MCF 10A (cell line): ENCODE measurements at regions of chr12 and their contacts with region 1.

Region 1: DNA sequence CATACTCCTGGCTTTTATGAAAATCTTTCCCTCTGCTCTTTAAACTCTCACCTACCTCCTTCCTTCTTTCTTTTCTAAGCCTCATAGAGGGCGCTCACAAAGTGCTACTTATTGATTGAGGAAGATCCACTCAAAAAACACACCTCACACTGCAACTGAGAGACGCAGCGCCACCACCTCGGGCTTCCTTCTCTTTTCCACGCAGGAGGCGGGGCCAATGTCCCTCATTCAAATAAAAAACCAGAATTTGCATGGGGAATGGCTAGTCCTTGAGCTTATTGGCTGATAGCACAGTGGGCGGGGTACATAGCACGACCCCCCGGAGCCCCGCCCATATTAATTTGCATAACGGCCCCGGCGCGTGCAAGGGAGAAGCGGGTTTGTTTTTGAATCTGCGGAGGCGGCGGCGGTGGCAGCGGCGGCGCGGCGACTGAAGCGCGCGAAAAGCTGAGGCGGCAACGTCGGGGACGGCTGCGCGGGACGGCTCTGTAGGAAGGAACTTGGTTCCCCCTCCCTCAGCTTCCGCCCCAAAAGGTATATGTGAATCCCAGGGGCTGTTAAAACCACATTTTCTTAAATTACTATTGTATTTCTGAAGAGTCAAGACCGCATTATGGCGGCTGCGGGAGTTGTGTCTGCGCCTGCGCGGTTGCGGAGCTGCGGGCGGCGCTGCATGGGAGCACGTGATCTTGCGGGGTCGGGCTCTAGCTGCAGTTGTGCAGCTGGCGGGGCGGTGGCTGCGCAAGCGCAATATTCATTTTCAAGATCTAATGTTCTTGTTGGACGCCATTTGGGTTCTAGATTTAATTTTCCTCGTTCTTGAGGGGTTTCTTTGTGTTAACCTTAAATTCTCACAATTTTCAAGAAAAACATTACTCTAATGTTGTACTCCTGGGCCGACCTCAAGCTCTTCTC is at the start of gene ATF7IP:
- DNase-seq: peak; percentile 96
- H3K4me3 Mint-ChIP-seq: peak within 1 kb of the TSS; percentile 69
- H3K27ac Mint-ChIP-seq: peak within 1 kb of the TSS; percentile 69
- H3K4me1 Mint-ChIP-seq: no peaks in the 10 kb centered on the region
- H3K27me3 Mint-ChIP-seq: no peaks in the 10 kb centered on the region
- CTCF ChIP-seq: no peak
- total RNA-seq, gene ATF7IP: 29.4 and 33.1 TPM in 2 replicates

Region 2: DNA sequence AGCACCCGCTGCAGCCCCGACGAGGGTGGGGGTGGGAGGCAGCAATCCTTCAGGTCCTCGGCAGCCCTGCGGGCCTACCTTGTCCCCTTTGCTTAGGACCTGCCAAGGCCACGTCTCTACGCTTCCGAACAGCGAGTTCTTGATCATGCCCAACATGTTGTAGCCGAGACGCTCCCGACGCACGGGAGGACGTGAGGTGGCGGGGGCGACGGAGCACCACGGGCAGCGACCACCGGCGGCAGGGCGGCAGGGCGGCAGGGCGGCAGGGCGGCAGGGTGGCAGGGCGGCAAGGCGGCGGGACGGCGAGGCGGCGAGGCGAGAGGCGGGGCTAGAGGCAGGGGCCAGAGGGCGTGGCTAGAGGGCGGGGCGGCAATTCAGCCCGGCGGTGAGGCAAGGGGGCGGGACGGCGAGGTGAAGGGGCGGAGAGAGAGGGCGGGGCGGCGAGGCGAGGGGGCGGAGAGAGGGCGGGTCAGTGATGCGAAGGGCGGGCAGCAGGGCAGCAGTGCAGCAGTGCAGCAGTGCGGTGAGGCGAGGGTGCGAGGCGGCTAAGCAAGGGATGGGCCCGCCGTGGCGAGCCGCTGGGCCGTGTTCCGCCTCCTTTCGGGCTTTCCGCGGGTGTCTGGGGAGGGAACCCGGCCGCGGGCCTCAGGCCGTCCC is 1365.5 kb before region 1 on chr12 and contains the start of gene HEBP1:
- CTCF ChIA-PET with region 1: no interaction called
- POLR2A ChIA-PET with region 1: interaction called, 5 read pairs
- intact Hi-C with region 1: loop called (anchors 5 kb)
- DNase-seq: peak; percentile 89
- H3K4me3 Mint-ChIP-seq: peak within 1 kb of the TSS; percentile 96
- H3K27ac Mint-ChIP-seq: peak within 1 kb of the TSS; percentile 84
- H3K4me1 Mint-ChIP-seq: peaks cover 33% of the 10 kb centered on the region
- H3K27me3 Mint-ChIP-seq: no peaks in the 10 kb centered on the region
- CTCF ChIP-seq: no peak
- total RNA-seq, gene HEBP1: 30.8 and 31.2 TPM in 2 replicates

Region 3: GRCh38 chr12:14256555-14257169 is 108.9 kb before region 1 on chr12:
- CTCF ChIA-PET with region 1: interaction called, 11 read pairs
- POLR2A ChIA-PET with region 1: interaction called, 17 read pairs
- intact Hi-C with region 1: loop called (anchors 1 kb)
- DNase-seq: peak; percentile 80
- H3K4me3 Mint-ChIP-seq: no peak overlapping the region
- H3K27ac Mint-ChIP-seq: peak overlapping the region; percentile 85
- H3K4me1 Mint-ChIP-seq: peaks cover 20% of the 10 kb centered on the region
- H3K27me3 Mint-ChIP-seq: no peaks in the 10 kb centered on the region
- CTCF ChIP-seq: peak; percentile 30

Region 4: GRCh38 chr12:14307004-14307403 is 58.5 kb before region 1 on chr12:
- CTCF ChIA-PET with region 1: interaction called, 3 read pairs
- POLR2A ChIA-PET with region 1: interaction called, 8 read pairs
- intact Hi-C with region 1: loop called (anchors 2 kb)
- DNase-seq: no peak
- H3K4me3 Mint-ChIP-seq: no peak overlapping the region
- H3K27ac Mint-ChIP-seq: peak overlapping the region; percentile 94
- H3K4me1 Mint-ChIP-seq: peaks cover 8% of the 10 kb centered on the region
- H3K27me3 Mint-ChIP-seq: no peaks in the 10 kb centered on the region
- CTCF ChIP-seq: no peak

Region 5: GRCh38 chr12:14403711-14404196 is 38.2 kb after region 1 on chr12:
- CTCF ChIA-PET with region 1: interaction called, 4 read pairs
- POLR2A ChIA-PET with region 1: interaction called, 11 read pairs
- intact Hi-C with region 1: no loop called
- DNase-seq: peak; percentile 69
- H3K4me3 Mint-ChIP-seq: peak overlapping the region; percentile 28
- H3K27ac Mint-ChIP-seq: peak overlapping the region; percentile 91
- H3K4me1 Mint-ChIP-seq: peaks cover 27% of the 10 kb centered on the region
- H3K27me3 Mint-ChIP-seq: no peaks in the 10 kb centered on the region
- CTCF ChIP-seq: no peak

Region 6: GRCh38 chr12:14618983-14619382 is 253.4 kb after region 1 on chr12:
- CTCF ChIA-PET with region 1: no interaction called
- POLR2A ChIA-PET with region 1: interaction called, 4 read pairs
- intact Hi-C with region 1: loop called (anchors 10 kb)
- DNase-seq: peak; percentile 48
- H3K4me3 Mint-ChIP-seq: no peak overlapping the region
- H3K27ac Mint-ChIP-seq: no peak overlapping the region
- H3K4me1 Mint-ChIP-seq: peaks cover 8% of the 10 kb centered on the region
- H3K27me3 Mint-ChIP-seq: no peaks in the 10 kb centered on the region
- CTCF ChIP-seq: peak; percentile 33